HepG2 (cell line): ENCODE measurements at regions of chr17 and their contacts with region 1.

Region 1: DNA sequence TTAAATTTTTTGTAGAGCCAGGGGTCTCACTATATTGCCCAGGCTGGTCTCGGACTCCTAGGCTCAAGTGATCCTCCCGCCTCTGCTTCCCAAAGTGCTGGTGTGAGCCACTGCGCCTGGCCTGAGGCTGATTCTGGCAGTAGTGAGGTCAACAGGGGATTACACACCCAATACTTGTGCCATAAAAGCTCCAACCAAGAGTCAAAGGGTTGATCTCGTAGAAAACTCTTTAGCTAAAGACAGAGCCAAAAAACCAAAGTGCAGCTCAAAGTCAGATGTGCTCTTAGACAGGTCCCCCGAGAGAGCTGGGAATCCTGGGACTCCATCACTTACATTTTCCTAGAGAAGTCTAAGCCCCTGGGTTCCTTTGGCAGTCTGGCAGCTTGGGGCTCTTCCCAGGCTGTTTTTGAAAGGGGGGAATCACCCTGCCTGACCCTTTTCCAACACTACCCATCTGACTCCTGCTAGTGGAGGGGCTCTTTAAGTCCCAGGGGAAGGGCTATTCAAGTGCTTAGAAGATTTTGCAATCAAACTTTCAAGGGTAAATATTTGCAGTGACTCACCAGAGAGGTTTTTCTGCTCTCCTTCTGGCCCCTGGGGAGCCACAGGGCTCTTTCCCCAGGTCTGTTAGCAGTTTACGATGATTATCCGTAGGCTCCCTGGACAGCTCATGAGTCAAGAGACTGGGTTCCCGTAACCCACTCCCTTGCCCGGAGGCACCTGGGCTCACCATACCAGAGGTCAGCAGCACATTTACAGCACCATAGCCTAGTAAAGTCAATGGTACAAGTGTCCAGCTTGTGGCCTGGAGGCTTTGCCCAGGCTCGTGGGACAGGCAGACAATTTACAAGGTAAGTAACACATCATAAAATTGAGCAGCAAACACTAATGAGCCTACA is 408.7 kb downstream of the SLC39A11 start:
- DNase-seq: peak; percentile 97
- ATAC-seq: peak; percentile 92
- H3K4me3 ChIP-seq: peak overlapping the region; percentile 24 to 63 (median 48); a peak in 5 of 6 replicates
- H3K27ac ChIP-seq: peak overlapping the region; percentile 57
- H3K4me1 ChIP-seq: peaks cover 57% of the 10 kb centered on the region
- H3K27me3 ChIP-seq: no peaks in the 10 kb centered on the region
- CTCF ChIP-seq: no peak; the same call in 1 of the 2 replicates
- EP300 ChIP-seq: peak; percentile 77 to 93; a peak in 3 of 4 replicates
- POLR2A ChIP-seq: 0 out of 4 replicates have a peak, but pooled peaks of 1 of the 2 experiments have one; percentile 33
- RAD21 ChIP-seq: no peak

Region 2: DNA sequence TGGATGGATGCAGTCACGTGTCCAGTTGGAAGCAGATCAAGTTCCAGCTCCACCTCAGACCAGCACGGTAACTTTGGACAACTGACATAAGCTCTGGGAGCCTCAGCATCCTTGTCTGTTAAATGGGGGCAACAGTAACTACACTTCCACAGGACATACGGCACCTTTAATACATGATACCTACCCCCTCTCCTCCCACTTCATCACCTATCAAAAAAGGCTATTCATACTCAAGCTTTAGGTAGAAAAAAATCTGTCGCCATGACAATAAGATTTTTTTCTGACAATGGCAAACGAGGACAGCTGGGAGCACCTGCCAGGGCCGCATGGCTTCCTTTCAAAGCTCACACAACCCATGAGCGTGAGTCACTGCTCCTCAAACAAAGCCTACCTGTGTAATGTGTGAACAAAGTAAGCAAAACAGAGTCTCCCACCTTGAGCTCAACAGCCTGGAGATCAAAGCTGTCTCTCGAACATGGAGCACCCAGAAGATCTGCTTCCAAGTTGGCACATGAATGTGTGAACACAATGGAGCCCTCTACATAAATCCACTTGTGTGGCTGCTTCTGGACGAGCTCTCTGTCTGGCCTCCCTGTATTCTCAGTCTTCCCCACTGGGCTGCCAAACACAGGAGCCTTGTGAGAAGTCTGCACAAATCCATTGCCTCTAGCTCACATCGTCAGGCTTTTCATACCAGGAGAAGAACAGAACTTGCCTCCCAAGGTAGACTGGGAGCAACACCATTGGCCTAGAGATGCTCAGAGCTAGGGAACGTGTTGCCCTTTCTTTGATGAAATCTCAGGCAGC is 103.2 kb before region 1 on chr17:
- CTCF ChIA-PET with region 1: no interaction called
- POLR2A ChIA-PET with region 1: interaction called, 27 read pairs
- in situ Hi-C with region 1: no loop called
- intact Hi-C with region 1: no loop called
- DNase-seq: peak; percentile 100
- ATAC-seq: peak; percentile 92
- H3K4me3 ChIP-seq: peak overlapping the region in 1 of 3 experiments; percentile 20; a peak in 1 of 6 replicates
- H3K27ac ChIP-seq: peak overlapping the region; percentile 80
- H3K4me1 ChIP-seq: peaks cover 73% of the 10 kb centered on the region
- H3K27me3 ChIP-seq: no peaks in the 10 kb centered on the region
- CTCF ChIP-seq: no peak
- EP300 ChIP-seq: peak; percentile 95 to 97
- POLR2A ChIP-seq: peak in 1 of 2 experiments; percentile 30; a peak in 2 of 4 replicates
- RAD21 ChIP-seq: 0 out of 2 replicates have a peak, but pooled peaks have one; percentile 6

Region 3: DNA sequence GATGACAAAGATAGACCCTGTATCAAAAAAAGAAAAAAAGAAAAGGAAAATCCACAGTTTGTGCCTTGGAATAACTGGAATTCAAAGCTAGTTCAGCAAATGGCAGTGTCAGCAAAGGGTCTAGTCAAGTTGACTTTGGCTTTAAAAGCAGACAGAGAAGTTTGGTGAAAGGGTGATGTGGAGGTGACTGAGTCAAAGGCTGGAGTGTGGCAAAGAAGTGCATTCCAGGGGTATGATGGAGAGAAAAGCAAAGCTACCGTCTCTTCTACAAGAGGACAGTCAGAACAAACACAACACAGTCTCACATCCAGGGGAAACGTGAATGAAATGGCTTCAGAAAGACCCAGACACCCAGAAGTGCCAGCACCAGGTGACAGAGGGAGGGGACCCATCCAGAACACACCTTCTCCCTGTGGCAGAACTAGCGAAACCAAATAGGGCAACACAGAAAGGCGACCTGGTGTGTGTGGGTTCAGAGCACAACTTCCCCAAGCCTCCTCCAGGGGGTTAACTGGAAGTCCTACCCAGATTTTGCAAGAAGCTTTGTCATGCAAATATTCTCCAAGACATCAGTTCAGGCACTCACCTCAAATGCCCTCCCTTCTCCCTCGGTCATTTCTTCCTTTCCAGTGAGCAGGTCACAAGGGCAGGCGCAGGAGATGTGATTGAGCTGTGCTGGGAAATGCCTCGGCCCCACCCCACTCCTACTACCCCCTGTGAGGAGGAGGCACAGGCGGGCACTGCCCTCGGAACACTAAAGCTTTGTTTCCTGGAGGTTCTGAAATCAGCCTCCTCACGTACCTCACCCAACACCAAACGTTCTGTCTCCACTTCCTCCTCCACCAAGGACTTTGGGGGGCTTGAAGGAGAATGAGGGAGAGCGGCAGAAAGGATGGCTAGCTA is 81.0 kb before region 1 on chr17:
- CTCF ChIA-PET with region 1: no interaction called
- POLR2A ChIA-PET with region 1: interaction called, 16 read pairs
- in situ Hi-C with region 1: no loop called
- intact Hi-C with region 1: no loop called
- DNase-seq: no peak
- ATAC-seq: peak; percentile 70
- H3K4me3 ChIP-seq: peak overlapping the region; percentile 9 to 52 (median 11)
- H3K27ac ChIP-seq: no peak overlapping the region
- H3K4me1 ChIP-seq: peaks cover 54% of the 10 kb centered on the region
- H3K27me3 ChIP-seq: no peaks in the 10 kb centered on the region
- CTCF ChIP-seq: no peak
- EP300 ChIP-seq: no peak
- POLR2A ChIP-seq: no peak
- RAD21 ChIP-seq: no peak

Region 4: GRCh38 chr17:72618001-72618509 is 65.7 kb before region 1 on chr17:
- CTCF ChIA-PET with region 1: no interaction called
- POLR2A ChIA-PET with region 1: interaction called, 11 read pairs
- in situ Hi-C with region 1: no loop called
- intact Hi-C with region 1: no loop called
- DNase-seq: peak; percentile 92
- ATAC-seq: peak; percentile 70
- H3K4me3 ChIP-seq: peak overlapping the region; percentile 33 to 64 (median 40); a peak in 5 of 6 replicates
- H3K27ac ChIP-seq: no peak overlapping the region
- H3K4me1 ChIP-seq: peaks cover 71% of the 10 kb centered on the region
- H3K27me3 ChIP-seq: no peaks in the 10 kb centered on the region
- CTCF ChIP-seq: no peak
- EP300 ChIP-seq: peak in 1 of 2 experiments; percentile 65; a peak in 2 of 4 replicates
- POLR2A ChIP-seq: peak in 1 of 2 experiments; percentile 20; a peak in 1 of 4 replicates
- RAD21 ChIP-seq: no peak

Region 5: DNA sequence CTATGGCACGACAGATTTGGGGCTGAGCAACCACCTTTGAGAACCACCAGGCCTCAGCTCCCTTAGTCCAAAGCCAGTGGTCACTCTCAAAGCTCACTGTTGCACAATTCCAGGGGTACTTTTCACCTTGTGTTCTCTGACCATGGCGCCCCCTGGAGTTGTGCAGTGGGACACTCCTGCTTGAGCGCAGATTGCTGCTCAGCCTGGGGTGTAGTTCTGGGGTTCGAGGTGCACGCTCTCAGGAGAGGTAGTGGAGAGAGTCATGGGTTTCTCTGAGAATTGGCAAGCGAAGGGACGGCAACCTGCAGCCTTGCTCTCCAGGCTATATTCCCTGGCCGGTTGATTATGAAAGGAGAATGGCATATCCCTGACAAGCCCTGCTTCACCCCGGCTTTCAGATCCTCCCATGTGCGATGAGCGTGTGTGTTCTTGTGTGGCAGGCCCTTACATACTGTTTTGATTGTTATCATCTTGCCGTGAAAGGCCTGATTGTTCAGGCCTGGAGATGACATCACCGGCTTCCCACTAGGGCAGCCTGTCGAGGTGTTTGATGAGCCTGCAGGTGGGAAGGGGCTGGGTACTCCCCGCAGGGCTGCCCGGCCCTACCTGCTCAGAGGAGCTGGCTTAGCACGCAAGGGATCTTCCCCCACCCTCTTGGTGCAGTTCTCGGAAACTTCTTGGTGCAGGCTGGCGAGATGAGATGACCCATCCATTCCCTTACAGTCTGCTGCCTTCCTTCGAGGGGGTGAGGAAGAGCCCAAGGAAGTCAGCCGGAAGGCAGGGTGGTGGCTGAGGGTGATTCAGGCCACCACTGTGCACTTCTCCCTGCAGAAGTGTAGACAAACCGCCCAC is 22.4 kb before region 1 on chr17:
- CTCF ChIA-PET with region 1: no interaction called
- POLR2A ChIA-PET with region 1: interaction called, 20 read pairs
- in situ Hi-C with region 1: no loop called
- intact Hi-C with region 1: loop called (anchors 1 kb)
- DNase-seq: peak; percentile 98
- ATAC-seq: peak; percentile 89
- H3K4me3 ChIP-seq: peak overlapping the region in 1 of 3 experiments; percentile 36; a peak in 2 of 6 replicates
- H3K27ac ChIP-seq: peak overlapping the region; percentile 50
- H3K4me1 ChIP-seq: peaks cover 37% of the 10 kb centered on the region
- H3K27me3 ChIP-seq: no peaks in the 10 kb centered on the region
- CTCF ChIP-seq: peak; percentile 78
- EP300 ChIP-seq: peak in 1 of 2 experiments; percentile 78; a peak in 3 of 4 replicates
- POLR2A ChIP-seq: 0 out of 4 replicates have a peak, but pooled peaks of 1 of the 2 experiments have one; percentile 29
- RAD21 ChIP-seq: peak; percentile 46; the same call in 1 of the 2 replicates

Region 6: GRCh38 chr17:72671016-72671415 is 12.7 kb before region 1 on chr17:
- CTCF ChIA-PET with region 1: no interaction called
- POLR2A ChIA-PET with region 1: interaction called, 24 read pairs
- in situ Hi-C with region 1: no loop called
- intact Hi-C with region 1: no loop called
- DNase-seq: no peak
- ATAC-seq: no peak
- H3K4me3 ChIP-seq: no peak overlapping the region
- H3K27ac ChIP-seq: no peak overlapping the region
- H3K4me1 ChIP-seq: peaks cover 27% of the 10 kb centered on the region
- H3K27me3 ChIP-seq: no peaks in the 10 kb centered on the region
- CTCF ChIP-seq: no peak
- EP300 ChIP-seq: no peak
- POLR2A ChIP-seq: no peak
- RAD21 ChIP-seq: no peak

Region 7: GRCh38 chr17:72699545-72699944 is 15.8 kb after region 1 on chr17:
- CTCF ChIA-PET with region 1: no interaction called
- POLR2A ChIA-PET with region 1: interaction called, 41 read pairs
- in situ Hi-C with region 1: no loop called
- intact Hi-C with region 1: loop called (anchors 1 kb)
- DNase-seq: no peak
- ATAC-seq: no peak
- H3K4me3 ChIP-seq: no peak overlapping the region
- H3K27ac ChIP-seq: no peak overlapping the region
- H3K4me1 ChIP-seq: peaks cover 46% of the 10 kb centered on the region
- H3K27me3 ChIP-seq: no peaks in the 10 kb centered on the region
- CTCF ChIP-seq: no peak
- EP300 ChIP-seq: no peak
- POLR2A ChIP-seq: no peak
- RAD21 ChIP-seq: no peak